CD8-positive, alpha-beta T cell (primary cell): ENCODE measurements at regions of chr2 and their contacts with region 1.

Region 1: GRCh38 chr2:189783927-189784867 is at the starts of genes ORMDL1 and PMS1:
- DNase-seq: peak; percentile 86 to 98 (median 95)
- ATAC-seq: peak; percentile 89
- H3K4me3 ChIP-seq: peak within 1 kb of the TSS; percentile 56 to 91
- H3K4me3 Mint-ChIP-seq: peak within 1 kb of the TSS; percentile 97
- H3K27ac ChIP-seq: peak within 1 kb of the TSS; percentile 96 to 97
- H3K27ac Mint-ChIP-seq: peak within 1 kb of the TSS; percentile 97
- H3K4me1 ChIP-seq: peaks cover 45% of the 10 kb centered on the region
- H3K4me1 Mint-ChIP-seq: peaks cover 65% of the 10 kb centered on the region
- H3K27me3 ChIP-seq: no peaks in the 10 kb centered on the region
- H3K27me3 Mint-ChIP-seq: no peaks in the 10 kb centered on the region
- CTCF ChIP-seq: no peak
- total RNA-seq, gene ORMDL1: 105 to 107 TPM
- total RNA-seq, gene PMS1: 12.2 to 15.1 TPM

Region 2: DNA sequence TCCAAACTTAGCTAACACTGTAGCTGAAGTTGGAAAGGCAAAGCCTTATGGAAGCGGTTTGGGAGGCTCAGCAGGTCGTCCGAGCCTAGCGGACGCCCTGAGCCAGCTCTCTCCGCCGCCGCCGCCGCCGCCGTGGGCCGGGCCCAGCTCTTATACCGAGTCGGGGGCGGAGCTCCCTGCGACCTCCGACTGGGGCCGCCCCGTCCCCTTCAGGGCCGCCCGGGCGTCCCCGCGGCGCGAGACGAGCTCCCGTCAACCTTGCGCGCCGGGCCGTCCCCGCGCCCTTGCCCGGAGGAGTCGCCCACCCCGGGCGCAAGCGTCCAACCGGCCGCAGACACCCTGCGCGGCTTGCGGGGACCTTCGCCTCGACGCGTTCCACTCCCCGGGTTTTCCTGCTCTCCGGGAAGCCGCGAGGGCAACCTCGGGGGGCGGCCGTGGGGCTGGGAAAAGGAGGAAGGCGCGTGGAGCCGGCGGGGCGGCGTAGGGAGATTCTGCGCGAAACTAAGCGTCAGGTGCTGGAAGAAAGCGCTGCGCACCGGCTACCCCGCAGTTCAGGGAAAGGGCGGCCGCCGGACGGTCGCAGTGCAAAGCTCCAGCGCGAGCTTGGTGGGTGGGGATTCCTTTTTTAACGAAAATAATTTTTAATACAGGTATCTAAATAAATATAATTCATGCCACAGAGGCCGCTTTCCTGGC is 203.4 kb before region 1 on chr2 and contains the start of gene SLC40A1:
- CTCF ChIA-PET with region 1: no interaction called
- POLR2A ChIA-PET with region 1: interaction called, 3 read pairs
- intact Hi-C with region 1: loop called in 1 of 2 experiments (anchors 5 kb)
- DNase-seq: peak in 8 of 9 experiments; percentile 36 to 78 (median 59)
- ATAC-seq: peak; percentile 95
- H3K4me3 ChIP-seq: peak within 1 kb of the TSS; percentile 55 to 63
- H3K4me3 Mint-ChIP-seq: peak within 1 kb of the TSS; percentile 91
- H3K27ac ChIP-seq: peak within 1 kb of the TSS; percentile 29
- H3K27ac Mint-ChIP-seq: peak within 1 kb of the TSS; percentile 81
- H3K4me1 ChIP-seq: peaks cover 17% of the 10 kb centered on the region
- H3K4me1 Mint-ChIP-seq: peaks cover 38% of the 10 kb centered on the region
- H3K27me3 ChIP-seq: peaks cover 0 to 2% of the 10 kb centered on the region in 2 experiments
- H3K27me3 Mint-ChIP-seq: peaks cover 17% of the 10 kb centered on the region
- CTCF ChIP-seq: no peak
- total RNA-seq, gene SLC40A1: 1.3 to 1.9 TPM

Region 3: GRCh38 chr2:189751080-189751658 is 33.0 kb before region 1 on chr2:
- CTCF ChIA-PET with region 1: interaction called, 4 read pairs
- POLR2A ChIA-PET with region 1: interaction called, 4 read pairs
- intact Hi-C with region 1: loop called in 1 of 2 experiments (anchors 5 kb)
- DNase-seq: peak in 8 of 9 experiments; percentile 4 to 66 (median 34)
- ATAC-seq: peak; percentile 84
- H3K4me3 ChIP-seq: no peak overlapping the region
- H3K4me3 Mint-ChIP-seq: no peak overlapping the region
- H3K27ac ChIP-seq: no peak overlapping the region
- H3K27ac Mint-ChIP-seq: no peak overlapping the region
- H3K4me1 ChIP-seq: no peaks in the 10 kb centered on the region
- H3K4me1 Mint-ChIP-seq: peaks cover 4% of the 10 kb centered on the region
- H3K27me3 ChIP-seq: no peaks in the 10 kb centered on the region
- H3K27me3 Mint-ChIP-seq: no peaks in the 10 kb centered on the region
- CTCF ChIP-seq: peak; percentile 64

Region 4: GRCh38 chr2:189772212-189772611 is 12.0 kb before region 1 on chr2:
- CTCF ChIA-PET with region 1: no interaction called
- POLR2A ChIA-PET with region 1: interaction called, 4 read pairs
- intact Hi-C with region 1: loop called in 1 of 2 experiments (anchors 1 kb)
- DNase-seq: no peak
- ATAC-seq: no peak
- H3K4me3 ChIP-seq: no peak overlapping the region
- H3K4me3 Mint-ChIP-seq: no peak overlapping the region
- H3K27ac ChIP-seq: no peak overlapping the region
- H3K27ac Mint-ChIP-seq: no peak overlapping the region
- H3K4me1 ChIP-seq: no peaks in the 10 kb centered on the region
- H3K4me1 Mint-ChIP-seq: peaks cover 19% of the 10 kb centered on the region
- H3K27me3 ChIP-seq: no peaks in the 10 kb centered on the region
- H3K27me3 Mint-ChIP-seq: no peaks in the 10 kb centered on the region
- CTCF ChIP-seq: no peak

Region 5: DNA sequence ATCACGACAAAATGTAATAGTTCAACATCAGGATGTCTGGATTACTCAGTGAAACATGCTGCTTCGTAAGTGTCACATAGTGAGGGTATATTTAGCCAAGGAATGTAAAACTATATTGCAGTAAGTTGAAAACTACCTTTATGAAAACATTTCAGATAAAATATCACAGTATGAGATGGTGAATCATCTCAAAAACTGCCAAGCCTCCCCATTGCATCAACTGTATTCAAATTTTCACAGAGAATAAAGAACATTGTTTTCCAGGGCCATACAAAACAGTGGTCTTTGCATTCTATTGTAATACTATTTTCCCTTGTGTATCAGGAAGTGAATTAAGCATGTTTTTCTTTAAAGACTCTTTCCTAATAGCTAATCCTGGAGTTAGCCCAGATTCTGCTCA is 325.9 kb after region 1 on chr2:
- CTCF ChIA-PET with region 1: no interaction called
- POLR2A ChIA-PET with region 1: no interaction called
- intact Hi-C with region 1: no loop called
- DNase-seq: no peak
- ATAC-seq: no peak
- H3K4me3 ChIP-seq: no peak overlapping the region
- H3K4me3 Mint-ChIP-seq: no peak overlapping the region
- H3K27ac ChIP-seq: no peak overlapping the region
- H3K27ac Mint-ChIP-seq: no peak overlapping the region
- H3K4me1 ChIP-seq: no peaks in the 10 kb centered on the region
- H3K4me1 Mint-ChIP-seq: no peaks in the 10 kb centered on the region
- H3K27me3 ChIP-seq: no peaks in the 10 kb centered on the region
- H3K27me3 Mint-ChIP-seq: no peaks in the 10 kb centered on the region
- CTCF ChIP-seq: no peak

Region 6: GRCh38 chr2:190408538-190409271 is 624.5 kb after region 1 on chr2:
- CTCF ChIA-PET with region 1: no interaction called
- POLR2A ChIA-PET with region 1: interaction called, 3 read pairs
- intact Hi-C with region 1: loop called (anchors 5 to 10 kb)
- DNase-seq: peak; percentile 62 to 92 (median 80)
- ATAC-seq: peak; percentile 56
- H3K4me3 ChIP-seq: peak overlapping the region; percentile 69 to 89
- H3K4me3 Mint-ChIP-seq: peak overlapping the region; percentile 92
- H3K27ac ChIP-seq: peak overlapping the region; percentile 98 to 99
- H3K27ac Mint-ChIP-seq: peak overlapping the region; percentile 99
- H3K4me1 ChIP-seq: peaks cover 51% of the 10 kb centered on the region
- H3K4me1 Mint-ChIP-seq: peaks cover 45% of the 10 kb centered on the region
- H3K27me3 ChIP-seq: no peaks in the 10 kb centered on the region
- H3K27me3 Mint-ChIP-seq: no peaks in the 10 kb centered on the region
- CTCF ChIP-seq: no peak

Region 7: GRCh38 chr2:190648289-190649034 is 864.3 kb after region 1 on chr2:
- CTCF ChIA-PET with region 1: no interaction called
- POLR2A ChIA-PET with region 1: no interaction called
- intact Hi-C with region 1: loop called (anchors 10 kb)
- DNase-seq: peak; percentile 80 to 97 (median 88)
- ATAC-seq: peak; percentile 81
- H3K4me3 ChIP-seq: peak overlapping the region; percentile 58 to 63
- H3K4me3 Mint-ChIP-seq: peak overlapping the region; percentile 84
- H3K27ac ChIP-seq: peak overlapping the region; percentile 63 to 84
- H3K27ac Mint-ChIP-seq: peak overlapping the region; percentile 88
- H3K4me1 ChIP-seq: peaks cover 26% of the 10 kb centered on the region
- H3K4me1 Mint-ChIP-seq: peaks cover 44% of the 10 kb centered on the region
- H3K27me3 ChIP-seq: no peaks in the 10 kb centered on the region
- H3K27me3 Mint-ChIP-seq: no peaks in the 10 kb centered on the region
- CTCF ChIP-seq: no peak